Naive thymus-derived CD4-positive, alpha-beta T cell (primary cell): ENCODE measurements at regions of chr3 and their contacts with region 1.

Region 1: GRCh38 chr3:101573449-101574387 is at the start of gene PCNP:
- DNase-seq: peak; percentile 95 to 99 (median 98)
- ATAC-seq: peak; percentile 91
- H3K4me3 ChIP-seq: peak within 1 kb of the TSS; percentile 89
- H3K4me3 Mint-ChIP-seq: peak within 1 kb of the TSS; percentile 91 to 100 (median 95)
- H3K27ac ChIP-seq: peak within 1 kb of the TSS; percentile 95
- H3K27ac Mint-ChIP-seq: peak within 1 kb of the TSS; percentile 92 to 99 (median 98)
- H3K4me1 ChIP-seq: peaks cover 33 to 52% of the 10 kb centered on the region in 2 donors
- H3K4me1 Mint-ChIP-seq: peaks cover 31 to 85% (median 72%) of the 10 kb centered on the region in 7 donors
- H3K27me3 ChIP-seq: no peaks in the 10 kb centered on the region
- H3K27me3 Mint-ChIP-seq: peaks cover 0 to 2% (median 0%) of the 10 kb centered on the region in 5 donors
- total RNA-seq, gene PCNP: 129 to 172 (median 160) TPM

Region 2: GRCh38 chr3:100260685-100261484 is 1312.8 kb before region 1 on chr3 and contains the start of gene TBC1D23:
- CTCF ChIA-PET with region 1: no interaction called
- POLR2A ChIA-PET with region 1: interaction called, 3 read pairs
- intact Hi-C with region 1: loop called in 1 of 2 experiments (anchors 2 kb)
- DNase-seq: peak; percentile 89 to 98 (median 96)
- ATAC-seq: peak; percentile 99
- H3K4me3 ChIP-seq: peak within 1 kb of the TSS; percentile 92
- H3K4me3 Mint-ChIP-seq: peak within 1 kb of the TSS; percentile 90 to 100 (median 94)
- H3K27ac ChIP-seq: peak within 1 kb of the TSS; percentile 89
- H3K27ac Mint-ChIP-seq: peak within 1 kb of the TSS; percentile 97 to 100 (median 99)
- H3K4me1 ChIP-seq: peaks cover 10 to 20% of the 10 kb centered on the region in 2 donors
- H3K4me1 Mint-ChIP-seq: peaks cover 37 to 75% (median 65%) of the 10 kb centered on the region in 7 donors
- H3K27me3 ChIP-seq: no peaks in the 10 kb centered on the region
- H3K27me3 Mint-ChIP-seq: no peaks in the 10 kb centered on the region
- total RNA-seq, gene TBC1D23: 30.8 to 42.4 (median 33.9) TPM

Region 3: DNA sequence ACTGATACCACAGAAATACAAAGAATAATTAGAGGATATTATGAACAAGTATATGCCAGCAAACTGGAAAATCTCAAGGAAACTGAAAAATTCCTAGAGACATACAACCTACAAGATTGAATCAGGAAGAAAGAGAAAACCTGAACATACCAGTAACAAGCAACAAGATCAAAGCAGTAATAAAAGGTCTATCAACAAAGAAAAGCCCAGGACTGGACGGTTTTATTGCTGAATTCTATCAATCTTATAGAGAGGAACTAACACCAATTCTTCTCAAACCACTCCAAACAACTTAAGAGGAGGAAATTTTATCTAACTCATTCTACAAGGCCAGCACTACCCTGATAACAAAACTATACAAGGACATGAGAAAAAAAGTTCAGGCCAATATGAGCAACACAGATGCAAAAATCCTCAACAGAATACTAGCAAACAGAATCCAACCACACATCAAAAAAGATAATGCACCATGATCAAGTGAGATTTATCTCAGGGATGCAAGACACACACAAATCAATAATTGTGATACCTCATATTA is 182.2 kb before region 1 on chr3:
- CTCF ChIA-PET with region 1: no interaction called
- POLR2A ChIA-PET with region 1: no interaction called
- intact Hi-C with region 1: loop called in 1 of 2 experiments (anchors 1 kb)
- DNase-seq: no peak
- ATAC-seq: no peak
- H3K4me3 ChIP-seq: no peak overlapping the region
- H3K4me3 Mint-ChIP-seq: peak overlapping the region in 1 of 10 donors; percentile 12
- H3K27ac ChIP-seq: no peak overlapping the region
- H3K27ac Mint-ChIP-seq: peak overlapping the region in 7 of 9 donors; percentile 5 to 71 (median 43)
- H3K4me1 ChIP-seq: peaks cover 0 to 12% of the 10 kb centered on the region in 2 donors
- H3K4me1 Mint-ChIP-seq: peaks cover 20 to 58% (median 49%) of the 10 kb centered on the region in 7 donors
- H3K27me3 ChIP-seq: no peaks in the 10 kb centered on the region
- H3K27me3 Mint-ChIP-seq: no peaks in the 10 kb centered on the region

Region 4: DNA sequence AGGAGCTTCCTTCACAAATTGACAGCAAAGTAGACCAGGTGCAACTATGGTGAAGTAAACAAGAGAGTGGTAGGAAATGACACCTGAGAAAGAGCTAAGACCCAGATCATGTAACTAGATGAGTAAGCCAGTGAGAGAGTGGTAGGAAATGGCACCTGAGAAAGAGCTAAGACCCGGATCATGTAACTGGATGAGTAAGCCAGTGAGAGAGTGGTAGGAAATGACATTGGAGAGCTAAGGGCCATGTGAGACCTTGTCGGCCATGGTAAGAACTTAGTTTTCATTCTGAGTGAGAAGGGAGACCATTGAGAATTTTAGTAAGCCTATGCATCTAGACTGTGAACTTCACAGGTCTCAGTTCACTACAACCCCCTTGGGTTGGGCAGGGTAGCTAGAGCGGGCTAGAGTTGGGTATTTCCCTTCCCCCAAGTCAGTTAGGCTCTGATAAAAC is 55.3 kb before region 1 on chr3:
- CTCF ChIA-PET with region 1: interaction called, 4 read pairs
- POLR2A ChIA-PET with region 1: interaction called, 73 read pairs
- intact Hi-C with region 1: loop called (anchors 1 kb)
- DNase-seq: peak in 8 of 9 donors; percentile 40 to 82 (median 76)
- ATAC-seq: peak; percentile 91
- H3K4me3 ChIP-seq: peak overlapping the region; percentile 17
- H3K4me3 Mint-ChIP-seq: peak overlapping the region; percentile 35 to 82 (median 62)
- H3K27ac ChIP-seq: peak overlapping the region; percentile 77
- H3K27ac Mint-ChIP-seq: peak overlapping the region; percentile 87 to 98 (median 96)
- H3K4me1 ChIP-seq: peaks cover 54 to 62% of the 10 kb centered on the region in 2 donors
- H3K4me1 Mint-ChIP-seq: peaks cover 20 to 80% (median 71%) of the 10 kb centered on the region in 7 donors
- H3K27me3 ChIP-seq: no peaks in the 10 kb centered on the region
- H3K27me3 Mint-ChIP-seq: no peaks in the 10 kb centered on the region

Region 5: DNA sequence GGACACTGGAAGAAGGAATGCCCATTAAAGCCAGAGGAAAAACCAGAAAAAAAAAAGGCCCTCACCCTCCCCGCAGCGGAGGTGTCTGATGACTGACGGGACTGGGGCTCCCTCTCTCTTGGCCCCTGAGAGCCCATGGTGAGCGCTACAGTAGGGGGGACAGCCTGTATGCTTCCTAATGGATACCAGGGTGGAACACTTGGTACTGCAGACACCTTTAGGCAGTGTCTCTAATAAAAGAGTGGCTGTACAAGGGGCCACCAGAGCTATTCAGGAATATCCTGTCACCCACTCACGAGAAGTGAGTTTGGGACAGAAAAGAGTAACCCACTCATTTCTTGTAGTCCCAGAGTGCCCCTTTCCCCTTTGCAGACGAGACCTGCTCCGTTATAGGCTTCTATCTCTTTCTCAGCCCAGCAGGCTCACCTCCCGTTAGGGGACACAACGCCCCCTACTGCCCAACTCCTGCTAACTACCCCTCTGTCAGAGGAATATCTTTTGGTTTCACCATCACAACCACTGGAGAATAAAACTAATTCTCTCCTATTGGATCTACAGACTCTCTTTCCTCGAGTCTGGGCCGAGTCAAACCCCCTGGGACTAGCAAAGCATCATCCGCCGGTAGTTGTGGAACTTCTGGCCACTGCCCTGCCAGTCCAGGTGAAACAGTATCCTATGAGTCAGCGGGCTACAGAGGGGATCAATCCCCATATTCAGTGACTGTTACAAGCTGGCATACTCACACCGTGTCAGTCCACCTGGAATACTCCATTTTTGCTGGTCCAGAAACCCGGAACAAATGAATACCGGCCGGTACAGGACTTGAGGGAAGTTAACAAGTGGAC is 62.5 kb after region 1 on chr3:
- CTCF ChIA-PET with region 1: interaction called, 4 read pairs
- POLR2A ChIA-PET with region 1: no interaction called
- intact Hi-C with region 1: loop called (anchors 1 kb)
- DNase-seq: peak; percentile 31 to 72 (median 65)
- ATAC-seq: peak; percentile 92
- H3K4me3 ChIP-seq: no peak overlapping the region
- H3K4me3 Mint-ChIP-seq: no peak overlapping the region
- H3K27ac ChIP-seq: no peak overlapping the region
- H3K27ac Mint-ChIP-seq: no peak overlapping the region
- H3K4me1 ChIP-seq: no peaks in the 10 kb centered on the region
- H3K4me1 Mint-ChIP-seq: peaks cover 0 to 5% (median 4%) of the 10 kb centered on the region in 7 donors
- H3K27me3 ChIP-seq: no peaks in the 10 kb centered on the region
- H3K27me3 Mint-ChIP-seq: no peaks in the 10 kb centered on the region

Region 6: DNA sequence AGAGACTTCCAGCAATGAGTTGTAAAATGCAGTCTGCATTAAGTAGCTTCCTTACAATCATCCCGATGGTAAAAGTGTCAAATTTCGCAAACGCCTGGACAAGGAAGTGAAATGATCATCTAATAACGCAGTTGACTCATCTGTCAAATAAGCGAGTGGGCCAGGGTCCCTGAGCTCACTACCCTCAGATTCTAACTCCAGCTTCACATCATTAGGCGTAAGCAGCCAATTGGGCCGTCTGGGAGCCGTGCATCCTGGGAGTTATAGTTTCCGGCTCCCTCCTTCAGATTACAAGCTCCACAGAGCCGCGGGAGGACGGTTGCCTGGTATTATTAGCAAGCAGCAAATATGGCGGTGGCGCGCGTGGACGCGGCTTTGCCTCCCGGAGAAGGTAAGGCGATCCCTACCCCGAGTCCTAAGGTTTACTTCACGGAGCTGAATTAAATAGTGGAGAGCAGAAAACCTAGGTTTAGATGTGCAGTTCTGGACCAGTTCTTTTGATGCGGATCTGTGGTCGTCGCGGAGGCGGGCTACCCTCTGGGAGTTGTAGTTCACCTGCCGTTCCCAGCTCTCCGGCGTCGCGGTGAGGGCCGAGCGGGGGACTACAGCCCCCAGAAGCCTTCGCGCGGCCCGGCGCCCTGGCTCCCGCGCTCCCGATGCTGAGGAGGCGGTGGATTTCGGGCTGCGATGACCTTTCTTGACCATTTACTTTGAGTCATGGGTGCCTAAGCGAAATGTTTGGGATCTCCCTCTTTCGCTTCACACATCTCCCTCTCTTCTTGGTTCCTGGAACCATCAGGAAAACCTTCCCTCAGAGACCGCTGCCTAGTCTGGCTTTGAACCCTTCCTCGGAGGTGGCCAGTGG is 150.8 kb after region 1 on chr3 and contains the start of gene CEP97:
- CTCF ChIA-PET with region 1: no interaction called
- POLR2A ChIA-PET with region 1: interaction called, 3 read pairs
- intact Hi-C with region 1: loop called (anchors 1 kb)
- DNase-seq: peak; percentile 70 to 90 (median 88)
- ATAC-seq: peak; percentile 98
- H3K4me3 ChIP-seq: peak within 1 kb of the TSS; percentile 91
- H3K4me3 Mint-ChIP-seq: peak within 1 kb of the TSS; percentile 88 to 100 (median 98)
- H3K27ac ChIP-seq: peak within 1 kb of the TSS; percentile 82
- H3K27ac Mint-ChIP-seq: peak within 1 kb of the TSS; percentile 91 to 98 (median 97)
- H3K4me1 ChIP-seq: peaks cover 25 to 30% of the 10 kb centered on the region in 2 donors
- H3K4me1 Mint-ChIP-seq: peaks cover 26 to 57% (median 44%) of the 10 kb centered on the region in 7 donors
- H3K27me3 ChIP-seq: no peaks in the 10 kb centered on the region
- H3K27me3 Mint-ChIP-seq: no peaks in the 10 kb centered on the region
- total RNA-seq, gene CEP97: 5.5 to 21.7 (median 10.9) TPM

Region 7: GRCh38 chr3:101936419-101937356 is 363.0 kb after region 1 on chr3:
- CTCF ChIA-PET with region 1: no interaction called
- POLR2A ChIA-PET with region 1: no interaction called
- intact Hi-C with region 1: loop called in 1 of 2 experiments (anchors 5 kb)
- DNase-seq: peak in 8 of 9 donors; percentile 34 to 68 (median 58)
- ATAC-seq: peak; percentile 90
- H3K4me3 ChIP-seq: peak overlapping the region; percentile 9
- H3K4me3 Mint-ChIP-seq: peak overlapping the region in 9 of 10 donors; percentile 44 to 77 (median 72)
- H3K27ac ChIP-seq: no peak overlapping the region
- H3K27ac Mint-ChIP-seq: peak overlapping the region; percentile 76 to 91 (median 87)
- H3K4me1 ChIP-seq: peaks cover 28 to 56% of the 10 kb centered on the region in 2 donors
- H3K4me1 Mint-ChIP-seq: peaks cover 15 to 43% (median 30%) of the 10 kb centered on the region in 7 donors
- H3K27me3 ChIP-seq: no peaks in the 10 kb centered on the region
- H3K27me3 Mint-ChIP-seq: peaks cover 0 to 27% (median 0%) of the 10 kb centered on the region in 5 donors

Region 8: GRCh38 chr3:102593812-102594602 is 1020.3 kb after region 1 on chr3:
- CTCF ChIA-PET with region 1: no interaction called
- POLR2A ChIA-PET with region 1: no interaction called
- intact Hi-C with region 1: no loop called
- DNase-seq: no peak
- ATAC-seq: no peak
- H3K4me3 ChIP-seq: no peak overlapping the region
- H3K4me3 Mint-ChIP-seq: no peak overlapping the region
- H3K27ac ChIP-seq: no peak overlapping the region
- H3K27ac Mint-ChIP-seq: no peak overlapping the region
- H3K4me1 ChIP-seq: no peaks in the 10 kb centered on the region
- H3K4me1 Mint-ChIP-seq: no peaks in the 10 kb centered on the region
- H3K27me3 ChIP-seq: no peaks in the 10 kb centered on the region
- H3K27me3 Mint-ChIP-seq: peaks cover 0 to 9% (median 4%) of the 10 kb centered on the region in 5 donors

Region 9: DNA sequence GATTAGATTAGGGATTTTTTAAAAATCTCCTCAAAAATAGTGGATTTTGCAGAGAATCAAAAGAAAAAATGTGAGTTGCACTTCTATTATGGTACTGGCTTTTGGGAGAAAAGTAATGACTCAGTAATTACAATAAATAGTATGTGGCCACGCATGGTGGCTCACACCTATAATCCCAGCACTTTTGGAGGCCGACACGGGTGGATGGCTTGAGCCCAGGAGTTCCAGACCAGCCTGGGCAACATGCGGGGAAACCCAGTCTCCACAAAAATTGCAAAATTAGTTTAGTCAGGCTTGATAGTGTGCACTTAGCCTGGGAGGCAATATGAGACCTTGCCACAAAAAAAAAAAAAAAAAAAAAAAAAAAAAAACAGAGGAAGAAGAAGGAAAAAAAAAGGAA is 1959.3 kb after region 1 on chr3:
- CTCF ChIA-PET with region 1: no interaction called
- POLR2A ChIA-PET with region 1: no interaction called
- intact Hi-C with region 1: no loop called
- DNase-seq: no peak
- ATAC-seq: no peak
- H3K4me3 ChIP-seq: no peak overlapping the region
- H3K4me3 Mint-ChIP-seq: no peak overlapping the region
- H3K27ac ChIP-seq: no peak overlapping the region
- H3K27ac Mint-ChIP-seq: no peak overlapping the region
- H3K4me1 ChIP-seq: no peaks in the 10 kb centered on the region
- H3K4me1 Mint-ChIP-seq: no peaks in the 10 kb centered on the region
- H3K27me3 ChIP-seq: no peaks in the 10 kb centered on the region
- H3K27me3 Mint-ChIP-seq: no peaks in the 10 kb centered on the region